GM13977 (cell line): ENCODE measurements at regions of chr2 and their contacts with region 1.

Region 1: GRCh38 chr2:37890893-37891495 is 34.1 kb upstream of the RMDN2 start:
- DNase-seq: peak; percentile 52
- CTCF ChIP-seq: peak; percentile 85

Region 2: DNA sequence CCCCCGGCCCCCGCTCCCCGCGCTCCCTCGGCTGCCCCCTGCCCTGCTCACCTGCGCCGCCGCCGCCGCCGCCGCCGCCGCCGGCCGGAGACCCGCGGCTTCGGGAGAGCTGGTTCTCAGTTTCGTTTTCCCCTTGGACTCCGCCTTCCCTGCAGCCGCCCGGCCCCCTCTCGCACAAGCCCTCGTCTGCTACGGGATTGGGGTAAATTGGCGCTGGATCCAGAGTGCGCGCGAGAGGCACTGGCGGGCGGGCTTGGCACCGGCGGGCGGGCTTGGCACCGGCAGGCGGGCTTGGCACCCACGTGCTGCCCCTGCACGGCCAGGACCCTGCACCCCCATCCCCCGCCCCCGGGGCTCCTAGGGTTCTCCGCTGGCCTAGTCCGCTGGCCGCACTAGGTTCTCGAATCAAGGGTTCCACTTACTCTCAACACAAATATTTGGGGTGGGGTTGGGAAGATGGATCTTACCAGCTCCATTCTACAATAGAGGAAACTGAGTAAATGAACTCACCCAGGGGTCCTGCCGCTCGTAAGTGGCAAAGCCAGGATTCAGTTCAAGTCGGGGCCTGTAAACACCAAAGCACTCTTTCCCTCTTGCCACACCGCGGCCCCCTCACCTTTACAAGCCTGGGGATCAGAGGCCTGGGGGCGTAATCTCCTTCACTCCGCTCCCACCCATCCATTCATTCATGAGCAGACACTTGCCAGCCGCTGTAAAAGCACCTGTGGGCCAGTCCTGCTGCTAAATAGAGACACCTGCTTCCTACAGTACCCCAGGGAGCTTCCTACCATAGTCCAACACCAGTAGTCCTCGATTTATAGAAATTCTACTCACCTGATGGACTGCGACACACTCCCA is 733.9 kb before region 1 on chr2 and contains the start of gene EIF2AK2:
- in situ Hi-C with region 1: loop called (anchors 25 kb)
- DNase-seq: peak; percentile 98
- CTCF ChIP-seq: no peak

Region 3: DNA sequence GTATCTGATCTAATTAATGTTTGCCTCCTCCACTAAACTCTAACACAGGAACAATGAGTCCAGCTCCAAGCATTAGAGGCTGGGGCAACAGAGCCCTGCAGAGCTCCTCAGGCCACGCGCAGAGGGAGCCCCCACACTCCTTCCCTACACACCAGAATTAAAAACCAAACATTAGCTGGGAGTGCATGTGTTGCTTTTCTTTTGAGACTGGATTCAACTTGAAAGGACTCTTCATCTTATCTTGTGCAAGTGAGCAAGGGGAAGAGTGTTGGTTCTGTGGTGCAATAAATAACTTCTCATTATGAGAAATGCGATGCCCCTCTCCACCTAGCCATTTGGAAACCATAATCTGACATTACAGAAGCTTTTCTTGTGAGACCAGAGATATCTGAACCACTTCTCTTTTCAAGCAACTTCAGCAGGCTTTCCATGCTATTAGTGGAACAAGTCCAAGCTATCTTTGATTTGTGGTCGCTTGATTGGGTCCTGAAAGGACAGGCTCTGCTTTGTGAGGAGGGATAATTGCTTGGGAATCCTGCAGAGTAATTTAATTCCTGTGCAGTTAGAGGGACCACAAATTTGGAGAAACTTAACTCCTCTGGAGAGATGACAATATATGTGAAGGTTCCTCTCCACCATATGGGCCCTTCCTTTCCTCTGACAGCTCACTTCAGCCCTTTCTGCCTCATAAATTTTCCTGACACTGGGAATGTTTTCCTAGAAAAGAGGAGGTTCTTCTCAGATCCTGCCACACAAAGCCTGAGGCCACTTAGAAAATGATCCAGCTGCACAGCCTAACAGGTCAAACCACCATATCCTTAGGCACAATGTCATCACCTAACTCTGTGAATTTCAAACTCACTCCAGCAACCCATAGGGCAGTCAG is 373.6 kb after region 1 on chr2:
- in situ Hi-C with region 1: loop called (anchors 10 kb)
- DNase-seq: no peak
- CTCF ChIP-seq: peak; percentile 6